Colonic mucosa (tissue), 4 donors: ENCODE measurements at regions of chr6 and their contacts with region 1.

Region 1: DNA sequence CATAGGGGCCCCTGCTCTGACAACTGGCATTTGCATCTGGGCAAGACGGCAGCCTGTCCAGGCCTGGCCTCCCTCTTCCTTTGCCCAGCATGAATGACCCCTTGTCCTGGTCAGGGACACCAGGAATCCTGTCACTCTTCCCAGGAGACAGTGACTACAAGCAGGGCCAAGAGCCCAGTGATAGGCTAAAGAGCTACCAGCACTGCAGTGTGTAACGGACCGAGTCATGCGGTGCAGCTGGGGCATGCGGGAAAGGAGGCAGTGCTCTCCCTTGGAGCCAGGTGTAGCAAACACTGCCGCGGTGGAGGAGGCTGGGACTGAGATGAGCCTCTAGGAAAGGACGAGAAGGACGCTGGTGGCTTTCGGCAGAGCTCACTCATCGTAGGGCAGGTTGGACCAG is 38.7 kb upstream of the DSP start:
- DNase-seq: no peak
- H3K4me3 ChIP-seq: no peak overlapping the region
- H3K27ac ChIP-seq: no peak overlapping the region
- H3K4me1 ChIP-seq: no peaks in the 10 kb centered on the region
- H3K27me3 ChIP-seq: no peaks in the 10 kb centered on the region
- CTCF ChIP-seq: no peak

Region 2: DNA sequence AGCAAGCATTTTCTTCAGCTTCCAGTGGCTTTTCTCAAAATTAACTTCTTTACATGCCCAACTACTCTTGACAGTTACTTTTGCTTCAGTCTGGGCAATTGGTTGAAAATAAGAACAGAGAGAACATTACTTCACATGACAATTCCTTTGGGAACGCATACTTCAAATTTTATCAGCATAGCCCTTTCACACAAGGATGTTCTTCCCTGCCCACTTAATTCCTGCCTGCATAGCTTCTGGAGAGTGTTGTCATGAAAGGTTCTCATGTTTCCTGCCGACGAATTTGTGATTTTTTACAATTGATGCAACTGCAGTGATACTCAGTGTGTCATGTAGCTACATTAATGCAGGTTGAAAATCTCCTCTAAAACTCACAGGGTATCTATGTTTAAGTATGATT is 65.3 kb after region 1 on chr6:
- intact Hi-C with region 1: loop called (anchors 2 kb)
- DNase-seq: no peak
- H3K4me3 ChIP-seq: no peak overlapping the region
- H3K27ac ChIP-seq: no peak overlapping the region
- H3K4me1 ChIP-seq: no peaks in the 10 kb centered on the region
- H3K27me3 ChIP-seq: no peaks in the 10 kb centered on the region
- CTCF ChIP-seq: no peak